Posterior vena cava (tissue), 2 donors: ENCODE measurements at regions of chr1 and their contacts with region 1.

Region 1: GRCh38 chr1:230681599-230681998 is 32.3 kb downstream of the AGT start:
- DNase-seq: no peak

Region 2: GRCh38 chr1:230632273-230632873 is 49.2 kb before region 1 on chr1:
- intact Hi-C with region 1: no loop called
- DNase-seq: no peak

Region 3: GRCh38 chr1:230658691-230659090 is 22.9 kb before region 1 on chr1:
- intact Hi-C with region 1: loop called in 1 of 2 experiments (anchors 2 kb)
- DNase-seq: no peak